A549 (cell line): ENCODE measurements at regions of chr7 and their contacts with region 1.

Region 1: DNA sequence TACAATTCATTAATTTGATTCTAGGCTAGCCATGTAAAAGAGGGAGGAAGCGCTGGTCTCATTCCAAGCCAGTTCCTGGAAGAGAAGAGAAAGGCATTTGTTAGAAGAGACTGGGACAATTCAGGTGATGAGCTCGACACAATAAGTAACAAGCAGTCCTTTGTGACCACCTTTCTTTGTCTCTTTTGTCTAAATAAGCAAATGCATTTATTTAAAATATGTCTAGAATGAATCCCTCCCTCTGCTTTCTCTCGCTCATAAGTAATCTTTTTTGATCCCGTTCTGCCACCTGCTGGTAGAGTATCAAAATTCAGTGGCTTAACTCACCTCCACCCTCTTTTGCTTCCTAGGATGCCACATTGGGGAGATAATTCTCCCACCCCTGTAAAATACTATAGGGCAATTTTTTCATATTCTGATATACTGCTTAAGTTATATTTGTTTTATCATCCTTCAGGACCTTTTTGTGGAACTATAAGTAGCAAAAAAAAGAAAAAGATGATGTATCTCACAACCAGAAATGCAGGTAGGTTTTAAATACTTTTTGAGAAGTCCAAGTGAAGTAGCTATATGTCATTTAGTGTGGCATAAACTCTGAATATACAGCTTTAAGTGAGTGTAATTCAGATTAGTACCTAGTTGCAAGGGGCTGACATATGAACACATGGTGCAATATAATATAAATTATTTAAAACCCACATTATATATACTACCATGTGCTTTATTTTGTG is 91.5 kb downstream of the GSDME start:
- DNase-seq: peak; percentile 32 to 44
- ATAC-seq: peak; percentile 91
- H3K4me3 ChIP-seq: no peak overlapping the region
- H3K27ac ChIP-seq: no peak overlapping the region
- H3K4me1 ChIP-seq: peaks cover 21% of the 10 kb centered on the region
- CTCF ChIP-seq: peak; percentile 87
- EP300 ChIP-seq: no peak
- POLR2A ChIP-seq: no peak
- RAD21 ChIP-seq: peak; percentile 77 to 85

Region 2: GRCh38 chr7:24290004-24290641 is 375.6 kb before region 1 on chr7:
- CTCF ChIA-PET with region 1: interaction called, 12 read pairs
- POLR2A ChIA-PET with region 1: no interaction called
- DNase-seq: peak; percentile 36 to 75
- ATAC-seq: peak; percentile 96 to 97
- H3K4me3 ChIP-seq: no peak overlapping the region
- H3K27ac ChIP-seq: no peak overlapping the region
- H3K4me1 ChIP-seq: peaks cover 5% of the 10 kb centered on the region; the same call in 1 of the 3 replicates
- CTCF ChIP-seq: peak; percentile 75
- EP300 ChIP-seq: no peak
- POLR2A ChIP-seq: no peak
- RAD21 ChIP-seq: peak; percentile 75 to 79

Region 3: DNA sequence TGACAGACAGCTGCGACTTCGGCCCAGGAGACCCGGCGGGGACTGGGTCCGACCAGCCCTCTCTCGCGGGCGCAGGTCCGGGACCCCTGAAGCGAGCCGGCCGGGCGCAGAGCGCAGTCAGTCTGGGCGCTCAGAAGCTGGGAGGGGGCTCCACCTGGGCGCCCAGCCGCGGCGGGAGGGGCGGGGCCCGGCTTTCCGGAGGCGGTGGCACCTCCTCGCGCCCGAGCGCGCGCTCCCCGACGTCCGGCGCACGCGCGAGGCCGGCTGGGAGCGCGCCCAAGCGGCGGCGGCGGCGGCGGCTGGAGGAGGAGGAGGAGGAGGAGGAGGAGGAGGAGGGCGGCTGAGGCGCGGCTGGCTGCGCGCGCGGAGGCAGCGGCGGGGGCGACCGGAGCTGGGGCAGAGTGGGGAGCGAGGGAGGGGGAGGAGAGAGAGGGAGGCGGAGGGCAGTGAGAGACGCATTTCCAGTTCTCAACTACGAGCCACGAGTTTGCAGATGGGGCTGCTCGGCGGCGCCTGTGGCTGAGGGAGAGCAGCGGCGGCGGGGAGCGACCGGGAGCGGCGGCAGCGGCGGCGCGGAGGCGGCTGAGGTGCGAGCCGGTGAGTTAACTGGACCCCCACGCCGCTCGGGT is 92.6 kb before region 1 on chr7 and contains the start of gene PALS2:
- CTCF ChIA-PET with region 1: interaction called, 58 read pairs
- POLR2A ChIA-PET with region 1: no interaction called
- DNase-seq: peak; percentile 60 to 77
- ATAC-seq: peak; percentile 69 to 73
- H3K4me3 ChIP-seq: peak within 1 kb of the TSS; percentile 65
- H3K27ac ChIP-seq: peak within 1 kb of the TSS; percentile 86 to 95
- H3K4me1 ChIP-seq: peaks cover 24% of the 10 kb centered on the region
- CTCF ChIP-seq: no peak
- EP300 ChIP-seq: no peak
- POLR2A ChIP-seq: peak; percentile 65
- RAD21 ChIP-seq: no peak; a peak in 1 of 5 replicates
- polyA plus RNA-seq, gene PALS2: 12.5 and 17.8 TPM in 2 replicates

Region 4: DNA sequence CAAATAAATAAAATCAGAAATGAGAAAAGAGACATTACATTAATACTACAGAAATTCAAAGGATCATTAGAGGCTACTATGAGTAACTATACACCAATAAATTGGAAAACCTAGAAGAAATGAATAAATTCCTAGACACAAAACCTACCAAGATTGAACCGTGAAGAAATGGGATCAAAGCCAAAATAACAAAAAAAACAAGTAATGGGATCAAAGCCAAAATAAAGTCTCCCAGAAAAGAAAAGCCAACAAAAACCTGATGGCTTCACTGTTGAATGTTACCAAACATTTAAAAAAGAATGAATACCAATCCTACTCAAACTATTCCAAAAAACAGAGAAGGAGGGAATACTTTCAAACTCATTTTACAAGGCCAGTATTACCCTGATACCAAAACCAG is 71.6 kb after region 1 on chr7:
- CTCF ChIA-PET with region 1: no interaction called
- POLR2A ChIA-PET with region 1: no interaction called
- DNase-seq: no peak
- ATAC-seq: no peak
- H3K4me3 ChIP-seq: no peak overlapping the region
- H3K27ac ChIP-seq: peak overlapping the region in 1 of 2 experiments; percentile 13; a peak in 1 of 6 replicates
- H3K4me1 ChIP-seq: peaks cover 55% of the 10 kb centered on the region
- CTCF ChIP-seq: no peak
- EP300 ChIP-seq: no peak
- POLR2A ChIP-seq: no peak
- RAD21 ChIP-seq: no peak